Ovary (tissue), 10 donors: ENCODE measurements at regions of chr6 and their contacts with region 1.

Region 1: GRCh38 chr6:135535989-135536414 is 38.5 kb upstream of the AHI1 start:
- DNase-seq: peak in 1 of 5 donors; percentile 25
- H3K4me3 ChIP-seq: no peak overlapping the region
- H3K27ac ChIP-seq: no peak overlapping the region
- H3K4me1 ChIP-seq: no peaks in the 10 kb centered on the region
- H3K27me3 ChIP-seq: no peaks in the 10 kb centered on the region
- CTCF ChIP-seq: peak; percentile 40 to 59 (median 52)
- EP300 ChIP-seq: no peak
- POLR2A ChIP-seq: no peak

Region 2: GRCh38 chr6:135522965-135523692 is 12.9 kb before region 1 on chr6:
- intact Hi-C with region 1: no loop called
- DNase-seq: no peak
- H3K4me3 ChIP-seq: no peak overlapping the region
- H3K27ac ChIP-seq: no peak overlapping the region
- H3K4me1 ChIP-seq: no peaks in the 10 kb centered on the region
- H3K27me3 ChIP-seq: no peaks in the 10 kb centered on the region
- CTCF ChIP-seq: no peak
- EP300 ChIP-seq: no peak
- POLR2A ChIP-seq: no peak

Region 3: DNA sequence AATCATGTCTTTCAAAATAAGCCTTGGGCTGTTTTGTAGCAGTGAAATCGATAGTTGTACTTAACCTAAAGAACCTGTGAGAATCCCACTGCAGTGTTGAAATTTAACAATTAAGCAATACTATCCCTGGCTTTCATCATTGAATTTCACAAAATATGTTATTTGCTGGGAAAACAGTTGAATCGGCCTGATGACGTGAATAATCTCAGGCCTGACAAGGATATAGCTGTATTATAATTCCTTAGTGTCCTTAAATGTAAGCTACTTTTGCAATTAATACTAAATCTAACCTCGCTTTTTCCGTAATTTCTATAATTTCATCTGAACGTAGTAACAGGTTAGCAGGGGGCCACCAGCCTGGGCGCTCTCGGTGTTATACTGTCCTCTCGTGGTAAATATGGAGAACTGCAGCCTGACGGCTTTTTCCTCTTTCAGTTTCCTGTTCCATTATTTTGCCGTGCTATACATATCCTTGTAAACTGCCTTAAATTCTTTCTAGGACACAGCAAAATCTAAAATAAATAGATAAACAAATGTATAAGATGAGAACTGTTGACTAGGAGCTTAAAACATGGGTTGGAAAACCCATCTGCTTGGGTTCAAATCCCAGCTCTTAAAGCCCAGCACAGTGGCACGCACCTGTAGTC is 690.1 kb after region 1 on chr6:
- intact Hi-C with region 1: loop called (anchors 5 kb)
- DNase-seq: peak; percentile 41 to 71 (median 66)
- H3K4me3 ChIP-seq: peak overlapping the region; percentile 28
- H3K27ac ChIP-seq: peak overlapping the region in 1 of 2 donors; percentile 8
- H3K4me1 ChIP-seq: peaks cover 1% of the 10 kb centered on the region
- H3K27me3 ChIP-seq: no peaks in the 10 kb centered on the region
- CTCF ChIP-seq: peak; percentile 100
- EP300 ChIP-seq: no peak
- POLR2A ChIP-seq: peak; percentile 11

Region 4: GRCh38 chr6:136317021-136317694 is 781.2 kb after region 1 on chr6:
- intact Hi-C with region 1: loop called in 1 of 4 experiments (anchors 5 kb)
- DNase-seq: peak in 4 of 5 donors; percentile 34 to 63 (median 46)
- H3K4me3 ChIP-seq: no peak overlapping the region
- H3K27ac ChIP-seq: no peak overlapping the region
- H3K4me1 ChIP-seq: no peaks in the 10 kb centered on the region
- H3K27me3 ChIP-seq: no peaks in the 10 kb centered on the region
- CTCF ChIP-seq: peak; percentile 52 to 71 (median 59)
- EP300 ChIP-seq: no peak
- POLR2A ChIP-seq: no peak